Activated naive CD4-positive, alpha-beta T cell treated with anti-CD3 and anti-CD28 coated beads for 36 hours (primary cell): ENCODE measurements at regions of chr15 and their contacts with region 1.

Region 1: DNA sequence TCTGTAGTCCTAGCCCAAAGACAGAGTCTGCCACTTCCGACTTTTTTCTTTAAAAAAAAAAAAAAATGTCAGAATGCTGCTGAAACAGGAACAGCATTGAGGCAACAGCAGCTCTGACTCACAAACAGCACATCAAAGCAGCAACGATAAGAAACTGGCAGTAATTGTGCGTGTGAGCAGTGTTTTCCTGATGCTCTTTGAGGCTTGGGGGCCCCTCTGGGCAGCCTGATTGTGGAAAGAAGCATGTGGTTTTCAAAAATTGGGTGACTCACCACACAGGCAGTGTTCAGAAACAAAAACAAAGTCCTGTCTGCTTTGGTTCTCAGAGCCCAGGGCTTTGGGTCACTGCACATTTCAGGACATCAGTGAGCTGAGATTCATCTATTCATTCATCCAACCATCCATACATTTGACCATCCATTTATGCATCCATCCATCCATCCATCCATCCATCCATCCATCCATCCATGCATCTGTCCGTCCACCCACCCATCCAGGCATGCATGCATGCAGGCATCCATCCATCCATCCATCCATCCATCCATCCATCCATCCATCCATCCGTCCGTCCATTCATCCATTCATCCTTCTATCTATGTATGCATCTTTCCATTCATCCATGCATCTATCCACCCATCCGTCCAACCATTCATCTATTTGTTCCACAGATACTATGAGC is 308.4 kb downstream of the RPLP1 start:
- DNase-seq: peak; percentile 93
- H3K4me3 Mint-ChIP-seq: peak overlapping the region; percentile 20
- H3K27ac Mint-ChIP-seq: peak overlapping the region; percentile 97
- H3K4me1 Mint-ChIP-seq: peaks cover 74% of the 10 kb centered on the region
- H3K27me3 Mint-ChIP-seq: peaks cover 2% of the 10 kb centered on the region

Region 2: GRCh38 chr15:69576035-69576526 is 184.9 kb before region 1 on chr15:
- CTCF ChIA-PET with region 1: no interaction called
- intact Hi-C with region 1: loop called (anchors 1 kb)
- DNase-seq: peak; percentile 82
- H3K4me3 Mint-ChIP-seq: no peak overlapping the region
- H3K27ac Mint-ChIP-seq: peak overlapping the region; percentile 17
- H3K4me1 Mint-ChIP-seq: peaks cover 30% of the 10 kb centered on the region
- H3K27me3 Mint-ChIP-seq: no peaks in the 10 kb centered on the region

Region 3: DNA sequence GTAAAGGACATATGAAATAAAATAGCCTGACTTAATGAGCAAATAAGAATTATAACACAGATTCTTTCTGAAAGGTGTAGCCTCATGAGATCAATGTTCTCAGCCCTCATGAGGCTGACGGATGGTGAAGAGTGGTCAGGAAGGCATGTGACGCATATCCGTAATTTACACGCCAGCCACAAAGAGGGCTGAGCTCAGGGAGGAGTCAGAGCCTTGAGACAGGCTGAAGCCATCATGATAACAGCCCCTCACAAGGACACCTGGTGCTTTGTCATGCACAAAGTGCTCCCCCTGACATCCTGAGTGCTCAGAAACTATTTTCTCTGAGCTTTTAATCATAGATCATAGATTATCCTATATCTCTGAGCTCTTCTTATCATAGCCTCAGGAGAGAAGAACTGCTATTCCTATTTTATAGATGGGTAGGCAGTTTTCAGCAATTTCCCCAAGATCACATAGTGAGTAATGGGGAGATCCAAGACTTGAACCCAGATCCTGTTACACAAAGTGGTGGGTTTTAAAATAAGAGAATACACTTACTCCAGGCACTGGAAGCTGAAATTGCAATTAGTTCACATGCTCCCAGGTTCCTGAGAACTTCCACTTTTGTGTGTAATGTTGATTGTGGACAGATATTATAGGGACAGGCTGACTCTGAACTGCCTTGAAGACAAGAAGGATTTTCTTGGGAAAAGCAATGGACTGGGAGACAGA is 41.3 kb before region 1 on chr15:
- CTCF ChIA-PET with region 1: interaction called, 6 read pairs
- intact Hi-C with region 1: loop called (anchors 1 kb)
- DNase-seq: peak; percentile 78
- H3K4me3 Mint-ChIP-seq: no peak overlapping the region
- H3K27ac Mint-ChIP-seq: peak overlapping the region; percentile 33
- H3K4me1 Mint-ChIP-seq: peaks cover 79% of the 10 kb centered on the region
- H3K27me3 Mint-ChIP-seq: no peaks in the 10 kb centered on the region

Region 4: DNA sequence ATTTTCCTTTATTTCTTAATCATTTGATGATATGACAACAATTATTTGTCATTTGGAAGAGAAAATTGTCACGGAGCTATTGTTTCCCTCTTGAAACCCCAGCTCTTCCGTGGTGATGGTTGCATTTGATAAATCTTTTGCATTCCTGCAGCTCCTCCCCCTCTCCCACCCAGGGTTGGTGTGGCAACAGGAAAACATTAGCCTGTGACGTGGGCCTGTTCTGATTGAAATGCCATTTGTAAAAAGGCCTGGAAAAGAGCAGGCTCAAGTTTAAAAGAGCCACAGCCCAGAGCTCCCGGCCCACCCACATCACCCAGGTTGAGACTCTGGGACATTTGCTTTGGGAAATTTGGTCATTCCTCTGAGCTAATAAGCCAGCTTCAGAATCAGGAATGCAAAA is 25.9 kb before region 1 on chr15:
- CTCF ChIA-PET with region 1: no interaction called
- intact Hi-C with region 1: no loop called
- DNase-seq: no peak
- H3K4me3 Mint-ChIP-seq: no peak overlapping the region
- H3K27ac Mint-ChIP-seq: no peak overlapping the region
- H3K4me1 Mint-ChIP-seq: no peaks in the 10 kb centered on the region
- H3K27me3 Mint-ChIP-seq: no peaks in the 10 kb centered on the region

Region 5: GRCh38 chr15:69807755-69808154 is 46.7 kb after region 1 on chr15:
- CTCF ChIA-PET with region 1: no interaction called
- intact Hi-C with region 1: loop called (anchors 1 kb)
- DNase-seq: peak; percentile 63
- H3K4me3 Mint-ChIP-seq: no peak overlapping the region
- H3K27ac Mint-ChIP-seq: peak overlapping the region; percentile 25
- H3K4me1 Mint-ChIP-seq: peaks cover 14% of the 10 kb centered on the region
- H3K27me3 Mint-ChIP-seq: peaks cover 2% of the 10 kb centered on the region

Region 6: GRCh38 chr15:70140543-70141375 is 379.7 kb after region 1 on chr15:
- CTCF ChIA-PET with region 1: no interaction called
- intact Hi-C with region 1: loop called (anchors 2 kb)
- DNase-seq: peak; percentile 78
- H3K4me3 Mint-ChIP-seq: no peak overlapping the region
- H3K27ac Mint-ChIP-seq: peak overlapping the region; percentile 32
- H3K4me1 Mint-ChIP-seq: peaks cover 34% of the 10 kb centered on the region
- H3K27me3 Mint-ChIP-seq: peaks cover 3% of the 10 kb centered on the region

Region 7: GRCh38 chr15:70512772-70513362 is 751.8 kb after region 1 on chr15:
- CTCF ChIA-PET with region 1: no interaction called
- intact Hi-C with region 1: loop called (anchors 1 kb)
- DNase-seq: peak; percentile 88
- H3K4me3 Mint-ChIP-seq: no peak overlapping the region
- H3K27ac Mint-ChIP-seq: no peak overlapping the region
- H3K4me1 Mint-ChIP-seq: peaks cover 24% of the 10 kb centered on the region
- H3K27me3 Mint-ChIP-seq: no peaks in the 10 kb centered on the region